GM12878 (cell line): ENCODE measurements at regions of chr11 and their contacts with region 1.

Region 1: GRCh38 chr11:26753723-26754504 is 32.1 kb upstream of the SLC5A12 start:
- DNase-seq: no peak
- ATAC-seq: peak; percentile 94
- H3K4me3 ChIP-seq: no peak overlapping the region
- H3K27ac ChIP-seq: no peak overlapping the region
- H3K4me1 ChIP-seq: no peaks in the 10 kb centered on the region
- H3K27me3 ChIP-seq: 0 out of 4 replicates have a peak, but pooled peaks cover 0 to 2% of the 10 kb centered on the region in 2 experiments
- CTCF ChIP-seq: peak; percentile 34 to 56 (median 51); a peak in 4 of 6 replicates
- EP300 ChIP-seq: no peak
- POLR2A ChIP-seq: no peak
- RAD21 ChIP-seq: peak; percentile 68

Region 2: GRCh38 chr11:26726960-26727359 is 27.0 kb before region 1 on chr11:
- CTCF ChIA-PET with region 1: no interaction called
- POLR2A ChIA-PET with region 1: no interaction called
- RAD21 ChIA-PET with region 1: no interaction called
- SMC1A ChIA-PET with region 1: no interaction called
- in situ Hi-C with region 1: no loop called
- intact Hi-C with region 1: no loop called
- DNase-seq: no peak
- ATAC-seq: no peak
- H3K4me3 ChIP-seq: no peak overlapping the region
- H3K27ac ChIP-seq: no peak overlapping the region
- H3K4me1 ChIP-seq: no peaks in the 10 kb centered on the region
- H3K27me3 ChIP-seq: no peaks in the 10 kb centered on the region
- CTCF ChIP-seq: no peak
- EP300 ChIP-seq: no peak
- POLR2A ChIP-seq: no peak
- RAD21 ChIP-seq: no peak

Region 3: GRCh38 chr11:27124514-27125264 is 370.8 kb after region 1 on chr11:
- CTCF ChIA-PET with region 1: interaction called, 3 read pairs
- POLR2A ChIA-PET with region 1: no interaction called
- RAD21 ChIA-PET with region 1: interaction called, 4 read pairs
- SMC1A ChIA-PET with region 1: interaction called, 4 read pairs
- in situ Hi-C with region 1: no loop called
- intact Hi-C with region 1: loop called (anchors 10 kb)
- DNase-seq: no peak
- ATAC-seq: no peak
- H3K4me3 ChIP-seq: no peak overlapping the region
- H3K27ac ChIP-seq: no peak overlapping the region
- H3K4me1 ChIP-seq: no peaks in the 10 kb centered on the region
- H3K27me3 ChIP-seq: no peaks in the 10 kb centered on the region
- CTCF ChIP-seq: no peak; a peak in 1 of 6 replicates
- EP300 ChIP-seq: no peak
- POLR2A ChIP-seq: no peak
- RAD21 ChIP-seq: no peak

Region 4: DNA sequence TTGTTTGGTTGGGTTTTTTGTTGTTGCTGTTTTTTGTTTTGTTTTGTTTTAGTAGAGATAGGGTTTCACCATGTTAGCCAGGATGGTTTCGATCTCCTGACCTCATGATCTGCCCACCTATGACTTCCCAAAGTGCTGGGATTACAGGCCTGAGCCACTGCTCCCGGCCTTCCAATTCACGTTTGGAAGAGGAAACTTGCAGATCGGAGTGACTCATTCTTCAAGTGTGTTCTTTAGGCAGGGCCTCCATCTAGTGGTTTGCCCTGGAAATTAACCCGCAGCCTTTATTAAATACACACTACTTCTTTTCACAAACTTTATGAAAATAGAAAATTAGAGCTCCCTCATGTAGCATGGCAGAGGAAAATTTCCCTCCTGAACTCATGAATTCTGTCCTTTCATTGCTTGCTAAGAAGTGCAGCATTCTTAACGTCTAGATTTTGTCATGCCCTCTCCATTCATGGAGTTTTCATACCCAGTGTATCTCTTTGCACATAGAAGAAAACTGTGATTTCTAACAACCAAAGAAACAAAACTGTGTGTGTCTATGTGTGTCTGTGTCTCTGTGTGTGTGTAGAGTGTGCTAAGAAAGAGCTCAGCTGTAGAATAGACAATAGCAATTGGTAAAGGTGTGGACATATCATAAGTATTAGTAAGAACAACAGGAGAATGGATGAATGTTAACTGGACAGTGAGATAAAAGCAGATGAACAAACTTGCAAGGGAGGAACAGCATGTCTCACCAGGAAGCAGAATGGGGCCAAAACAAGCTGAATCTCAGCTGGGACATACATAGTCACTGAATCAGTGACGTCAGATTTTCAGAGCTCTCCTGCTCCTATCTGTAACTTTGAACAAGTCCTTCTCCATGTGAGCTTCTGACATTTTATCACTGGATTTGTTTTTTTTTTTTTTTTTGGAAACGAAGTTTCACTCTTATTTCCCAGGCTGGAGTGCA is 405.1 kb after region 1 on chr11:
- CTCF ChIA-PET with region 1: interaction called, 39 read pairs
- POLR2A ChIA-PET with region 1: no interaction called
- RAD21 ChIA-PET with region 1: interaction called, 14 read pairs
- SMC1A ChIA-PET with region 1: interaction called, 17 read pairs
- in situ Hi-C with region 1: loop called (anchors 5 kb)
- intact Hi-C with region 1: loop called (anchors 1 kb)
- DNase-seq: no peak
- ATAC-seq: peak; percentile 82
- H3K4me3 ChIP-seq: no peak overlapping the region
- H3K27ac ChIP-seq: no peak overlapping the region
- H3K4me1 ChIP-seq: no peaks in the 10 kb centered on the region
- H3K27me3 ChIP-seq: no peaks in the 10 kb centered on the region
- CTCF ChIP-seq: peak; percentile 62 to 75 (median 62); a peak in 5 of 6 replicates
- EP300 ChIP-seq: no peak
- POLR2A ChIP-seq: no peak
- RAD21 ChIP-seq: peak; percentile 89

Region 5: GRCh38 chr11:27477831-27478230 is 723.9 kb after region 1 on chr11:
- CTCF ChIA-PET with region 1: no interaction called
- POLR2A ChIA-PET with region 1: interaction called, 3 read pairs
- RAD21 ChIA-PET with region 1: no interaction called
- SMC1A ChIA-PET with region 1: no interaction called
- in situ Hi-C with region 1: loop called (anchors 5 kb)
- intact Hi-C with region 1: no loop called
- DNase-seq: no peak
- ATAC-seq: no peak
- H3K4me3 ChIP-seq: no peak overlapping the region
- H3K27ac ChIP-seq: no peak overlapping the region
- H3K4me1 ChIP-seq: no peaks in the 10 kb centered on the region
- H3K27me3 ChIP-seq: no peaks in the 10 kb centered on the region
- CTCF ChIP-seq: no peak
- EP300 ChIP-seq: no peak
- POLR2A ChIP-seq: no peak
- RAD21 ChIP-seq: no peak

Region 6: GRCh38 chr11:27571156-27571825 is 817.4 kb after region 1 on chr11:
- CTCF ChIA-PET with region 1: no interaction called
- POLR2A ChIA-PET with region 1: no interaction called
- RAD21 ChIA-PET with region 1: no interaction called
- SMC1A ChIA-PET with region 1: no interaction called
- in situ Hi-C with region 1: no loop called
- intact Hi-C with region 1: no loop called
- DNase-seq: no peak
- ATAC-seq: no peak
- H3K4me3 ChIP-seq: no peak overlapping the region
- H3K27ac ChIP-seq: no peak overlapping the region
- H3K4me1 ChIP-seq: no peaks in the 10 kb centered on the region
- H3K27me3 ChIP-seq: no peaks in the 10 kb centered on the region
- CTCF ChIP-seq: no peak
- EP300 ChIP-seq: no peak
- POLR2A ChIP-seq: no peak
- RAD21 ChIP-seq: no peak